WTC11 (cell line): ENCODE measurements at regions of chr16 and their contacts with region 1.

Region 1: DNA sequence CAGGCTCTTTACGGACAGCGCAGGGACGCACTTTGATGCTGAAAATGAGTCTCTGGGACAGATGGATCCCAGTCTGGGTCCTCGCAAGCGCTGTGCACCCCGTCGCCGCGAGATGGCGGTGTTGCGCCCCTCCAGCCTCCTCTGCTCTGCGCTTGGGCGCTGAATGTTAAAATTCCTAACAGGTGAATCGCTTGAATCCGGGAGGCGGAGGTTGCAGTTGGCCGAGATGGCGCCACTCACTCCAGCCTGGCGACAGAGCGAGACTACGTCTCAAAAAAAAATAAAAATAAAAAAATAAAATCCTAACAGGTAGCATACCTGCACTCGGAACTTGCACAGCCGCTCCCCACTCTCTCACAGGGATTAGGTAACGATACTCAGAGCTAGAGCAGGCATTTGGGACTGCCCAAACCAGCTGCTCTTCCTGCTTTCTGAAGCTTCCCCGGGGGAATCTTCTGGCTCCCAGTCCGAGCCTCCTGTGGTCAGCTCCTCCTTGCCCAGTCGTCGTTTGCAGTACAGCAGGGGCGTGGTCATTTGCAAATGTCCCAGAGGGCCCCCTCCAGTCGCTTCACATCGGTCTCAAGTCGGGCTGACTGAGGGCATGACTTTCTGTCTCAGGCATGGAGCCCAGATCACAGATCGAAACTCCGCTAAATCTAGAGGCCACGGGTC is 26.2 kb upstream of the OSGIN1 start:
- DNase-seq: peak; percentile 95
- ATAC-seq: peak; percentile 92
- H3K4me3 Mint-ChIP-seq: peak overlapping the region; percentile 68
- H3K27ac Mint-ChIP-seq: peak overlapping the region; percentile 98
- H3K4me1 Mint-ChIP-seq: peaks cover 26% of the 10 kb centered on the region
- H3K27me3 Mint-ChIP-seq: peaks cover 2% of the 10 kb centered on the region; the same call in 1 of the 2 replicates
- CTCF ChIP-seq: peak; percentile 86

Region 2: GRCh38 chr16:83913245-83913633 is 13.6 kb before region 1 on chr16:
- CTCF ChIA-PET with region 1: interaction called, 18 read pairs
- POLR2A ChIA-PET with region 1: interaction called, 3 read pairs
- DNase-seq: no peak
- ATAC-seq: peak; percentile 43
- H3K4me3 Mint-ChIP-seq: no peak overlapping the region
- H3K27ac Mint-ChIP-seq: 0 out of 2 replicates have a peak overlapping the region, but pooled peaks have one; percentile 38
- H3K4me1 Mint-ChIP-seq: peaks cover 4% of the 10 kb centered on the region; the same call in 1 of the 2 replicates
- H3K27me3 Mint-ChIP-seq: no peaks in the 10 kb centered on the region; the same call in 1 of the 2 replicates
- CTCF ChIP-seq: no peak